Activated naive CD4-positive, alpha-beta T cell treated with anti-CD3 and anti-CD28 coated beads for 36 hours (primary cell): ENCODE measurements at regions of chrX and their contacts with region 1.

Region 1: GRCh38 chrX:129759576-129760061 is 20.1 kb upstream of the SASH3 start:
- DNase-seq: peak; percentile 81
- H3K4me3 Mint-ChIP-seq: peak overlapping the region; percentile 32
- H3K27ac Mint-ChIP-seq: peak overlapping the region; percentile 68
- H3K4me1 Mint-ChIP-seq: peaks cover 51% of the 10 kb centered on the region
- H3K27me3 Mint-ChIP-seq: no peaks in the 10 kb centered on the region

Region 2: GRCh38 chrX:129678614-129679195 is 80.9 kb before region 1 on chrX:
- CTCF ChIA-PET with region 1: interaction called, 5 read pairs
- intact Hi-C with region 1: loop called (anchors 5 kb)
- DNase-seq: peak; percentile 50
- H3K4me3 Mint-ChIP-seq: peak overlapping the region; percentile 57
- H3K27ac Mint-ChIP-seq: peak overlapping the region; percentile 24
- H3K4me1 Mint-ChIP-seq: peaks cover 12% of the 10 kb centered on the region
- H3K27me3 Mint-ChIP-seq: no peaks in the 10 kb centered on the region

Region 3: DNA sequence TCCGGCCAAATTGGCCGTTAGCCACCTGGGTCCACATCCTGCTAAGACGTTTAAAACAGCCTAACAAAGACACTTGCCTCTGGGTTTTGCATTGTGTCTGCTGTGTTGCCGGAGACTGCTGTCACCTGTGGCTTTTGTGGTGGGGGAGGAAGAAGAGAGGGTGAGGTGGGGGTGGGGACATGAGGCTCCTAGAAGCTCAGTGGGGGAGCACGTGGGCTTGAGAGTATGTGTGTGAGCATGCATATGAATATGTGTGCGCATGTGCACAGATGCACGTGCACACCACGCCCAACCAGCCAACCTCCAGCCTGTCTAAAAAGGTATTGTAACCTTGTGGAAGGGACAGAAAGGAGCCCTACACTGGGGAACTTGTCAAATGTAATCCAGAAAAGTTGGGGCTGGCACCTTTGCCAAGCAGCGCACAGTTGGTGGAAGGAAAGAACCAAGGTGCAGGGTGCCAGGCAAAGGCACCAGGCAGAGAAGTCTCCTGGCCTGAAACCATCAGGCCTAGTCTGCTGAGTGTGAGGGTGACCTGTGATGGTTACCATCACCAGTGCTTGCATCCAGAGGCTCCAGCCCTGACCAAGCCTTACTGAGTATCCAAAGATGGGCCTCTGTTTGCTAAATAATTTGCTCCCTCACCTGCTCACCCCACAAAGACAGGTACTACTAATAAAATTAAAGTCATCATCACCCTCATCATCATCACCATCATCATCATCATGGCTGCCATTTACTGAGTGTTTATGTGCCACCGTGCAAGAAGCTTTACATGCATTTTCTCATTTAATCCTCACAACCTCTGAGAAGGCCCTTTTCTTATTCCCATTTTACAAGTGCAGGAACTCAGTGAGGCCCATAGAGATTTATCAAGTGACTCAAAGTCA is 10.1 kb after region 1 on chrX:
- CTCF ChIA-PET with region 1: interaction called, 10 read pairs
- intact Hi-C with region 1: loop called (anchors 1 kb)
- DNase-seq: peak; percentile 68
- H3K4me3 Mint-ChIP-seq: no peak overlapping the region
- H3K27ac Mint-ChIP-seq: peak overlapping the region; percentile 77
- H3K4me1 Mint-ChIP-seq: peaks cover 62% of the 10 kb centered on the region
- H3K27me3 Mint-ChIP-seq: no peaks in the 10 kb centered on the region